ENCODE measurements at regions of chr6 and their contacts with region 1.

Region 1: DNA sequence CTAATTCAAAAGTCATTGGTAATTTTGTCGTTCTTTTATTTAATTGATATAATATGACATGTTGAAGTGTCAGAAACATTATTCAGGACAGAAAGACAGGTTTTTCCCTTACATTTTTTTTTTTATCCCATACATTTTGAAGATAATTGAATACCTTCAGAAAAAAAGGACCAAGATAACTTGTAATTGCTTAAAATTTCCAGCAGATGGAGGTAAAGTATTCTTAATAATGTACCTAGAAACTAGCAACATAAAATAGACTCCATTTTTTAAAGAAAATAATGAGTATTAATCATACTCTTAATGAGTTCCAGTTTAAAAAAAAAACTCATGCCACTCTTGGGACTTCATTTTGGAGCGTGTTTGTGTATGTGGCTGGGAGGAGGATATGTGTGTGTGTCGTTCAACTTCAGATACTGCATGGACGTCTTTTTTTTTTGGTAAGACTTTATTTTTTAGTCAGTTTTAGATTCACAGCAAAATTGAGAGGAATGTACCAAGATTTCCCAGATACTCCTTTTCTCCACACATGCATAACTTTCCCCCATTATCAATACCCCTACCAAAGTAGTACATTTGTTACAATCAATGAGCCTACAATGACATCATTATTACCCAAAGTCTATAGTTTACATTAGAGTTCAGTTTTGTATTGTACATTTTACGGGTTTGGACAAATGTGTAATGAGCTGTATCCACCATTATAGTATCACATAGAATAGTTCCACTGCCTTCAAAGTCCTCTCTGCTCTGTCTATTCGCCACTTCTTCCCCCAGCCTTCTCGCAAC is 79.4 kb downstream of the ROS1 start:
- DNase-seq: peak in 2 of 4 experiments; percentile 3 to 13
- ATAC-seq: peak; percentile 30; the same call in 2 of the 3 replicates
- H3K4me3 ChIP-seq: no peak overlapping the region
- H3K27ac ChIP-seq: no peak overlapping the region
- H3K4me1 ChIP-seq: peaks cover 0 to 4% of the 10 kb centered on the region in 2 experiments; a peak in 2 of 5 replicates
- H3K27me3 ChIP-seq: no peaks in the 10 kb centered on the region
- CTCF ChIP-seq: peak in 1 of 3 experiments; percentile 62; a peak in 3 of 6 replicates
- EP300 ChIP-seq: no peak
- POLR2A ChIP-seq: no peak
- RAD21 ChIP-seq: peak; percentile 52 to 67; a peak in 3 of 4 replicates

Region 2: GRCh38 chr6:117034971-117035370 is 311.4 kb before region 1 on chr6:
- CTCF ChIA-PET with region 1: no interaction called
- POLR2A ChIA-PET with region 1: no interaction called
- in situ Hi-C with region 1: no loop called
- intact Hi-C with region 1: no loop called
- DNase-seq: no peak
- ATAC-seq: no peak
- H3K4me3 ChIP-seq: no peak overlapping the region
- H3K27ac ChIP-seq: no peak overlapping the region
- H3K4me1 ChIP-seq: no peaks in the 10 kb centered on the region
- H3K27me3 ChIP-seq: no peaks in the 10 kb centered on the region
- CTCF ChIP-seq: no peak
- EP300 ChIP-seq: no peak
- POLR2A ChIP-seq: no peak
- RAD21 ChIP-seq: no peak

Region 3: DNA sequence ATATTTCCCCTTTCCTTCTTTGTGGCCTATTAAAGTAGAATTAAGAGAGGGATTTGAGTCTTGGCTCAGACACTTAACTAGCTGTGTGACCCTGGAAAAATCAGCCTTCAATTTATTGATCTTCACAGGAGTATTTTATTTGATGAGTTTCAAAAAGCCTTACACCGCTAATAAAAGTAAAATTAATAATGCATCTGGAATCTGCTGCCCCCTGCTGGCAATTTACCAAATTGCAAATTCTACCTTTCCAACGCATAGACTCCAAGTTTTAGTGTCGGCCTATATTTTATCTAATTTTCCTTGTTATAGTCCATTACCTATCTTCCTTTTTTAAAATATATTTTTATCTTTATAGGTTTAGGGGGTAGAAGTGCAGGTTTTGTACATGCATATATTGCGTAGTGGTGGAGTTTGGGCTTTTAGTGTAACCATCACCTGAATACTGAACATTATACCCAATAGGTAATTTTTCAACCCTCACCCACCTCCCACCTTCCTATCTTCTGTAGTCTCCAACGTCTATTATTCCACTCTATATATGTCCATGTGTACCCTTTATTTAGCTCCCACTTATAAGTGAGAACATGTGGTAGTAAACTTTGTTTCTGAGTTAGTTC is 209.7 kb after region 1 on chr6:
- CTCF ChIA-PET with region 1: interaction called, 11 read pairs
- POLR2A ChIA-PET with region 1: no interaction called
- in situ Hi-C with region 1: no loop called
- intact Hi-C with region 1: loop called (anchors 5 kb)
- DNase-seq: peak in 3 of 4 experiments; percentile 30 to 51 (median 33)
- ATAC-seq: peak; percentile 45
- H3K4me3 ChIP-seq: no peak overlapping the region
- H3K27ac ChIP-seq: no peak overlapping the region
- H3K4me1 ChIP-seq: peaks cover 0 to 8% of the 10 kb centered on the region in 2 experiments; a peak in 3 of 5 replicates
- H3K27me3 ChIP-seq: no peaks in the 10 kb centered on the region
- CTCF ChIP-seq: peak; percentile 50 to 81 (median 55); a peak in 5 of 6 replicates
- EP300 ChIP-seq: no peak
- POLR2A ChIP-seq: no peak
- RAD21 ChIP-seq: peak; percentile 81 to 83

Region 4: DNA sequence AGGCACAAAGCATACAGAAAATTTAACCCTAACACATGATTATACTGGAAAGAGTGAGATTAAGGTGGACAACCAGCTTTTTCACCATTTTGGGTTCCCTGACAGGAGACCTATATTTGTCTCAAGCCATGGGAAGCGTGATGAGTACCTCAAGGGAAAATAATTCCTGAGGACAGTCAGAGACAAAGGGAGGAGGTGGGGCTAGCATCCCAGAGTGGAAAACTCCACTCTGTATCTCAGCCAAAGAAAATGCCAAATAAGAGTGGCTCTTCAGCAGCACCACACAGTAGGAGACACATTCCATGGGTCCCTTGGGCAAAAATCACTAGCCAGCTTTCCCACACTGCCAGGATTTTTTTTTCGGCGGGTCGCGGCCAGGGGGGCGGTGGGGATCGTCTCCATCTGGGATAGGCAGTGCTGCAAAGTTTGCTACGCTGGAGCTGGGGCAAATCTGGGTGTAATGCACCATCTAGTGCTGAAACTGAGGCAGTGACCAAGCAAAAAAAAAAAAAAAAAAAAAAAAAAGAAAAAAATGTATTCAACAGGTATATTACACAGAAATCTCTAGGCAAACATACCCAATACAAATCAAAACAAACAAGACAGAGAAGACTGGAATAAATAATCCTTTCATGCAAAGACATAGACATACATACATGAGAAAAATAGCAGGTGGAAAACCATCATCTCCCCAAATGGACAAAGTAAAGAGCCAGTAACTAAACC is 483.4 kb after region 1 on chr6:
- CTCF ChIA-PET with region 1: no interaction called
- POLR2A ChIA-PET with region 1: no interaction called
- in situ Hi-C with region 1: no loop called
- intact Hi-C with region 1: loop called (anchors 2 kb)
- DNase-seq: peak in 2 of 4 experiments; percentile 14 to 19
- ATAC-seq: peak; percentile 69; the same call in 2 of the 3 replicates
- H3K4me3 ChIP-seq: no peak overlapping the region
- H3K27ac ChIP-seq: no peak overlapping the region
- H3K4me1 ChIP-seq: no peaks in the 10 kb centered on the region
- H3K27me3 ChIP-seq: no peaks in the 10 kb centered on the region
- CTCF ChIP-seq: peak; percentile 39 to 47 (median 43); a peak in 5 of 6 replicates
- EP300 ChIP-seq: no peak
- POLR2A ChIP-seq: no peak
- RAD21 ChIP-seq: no peak

Region 5: DNA sequence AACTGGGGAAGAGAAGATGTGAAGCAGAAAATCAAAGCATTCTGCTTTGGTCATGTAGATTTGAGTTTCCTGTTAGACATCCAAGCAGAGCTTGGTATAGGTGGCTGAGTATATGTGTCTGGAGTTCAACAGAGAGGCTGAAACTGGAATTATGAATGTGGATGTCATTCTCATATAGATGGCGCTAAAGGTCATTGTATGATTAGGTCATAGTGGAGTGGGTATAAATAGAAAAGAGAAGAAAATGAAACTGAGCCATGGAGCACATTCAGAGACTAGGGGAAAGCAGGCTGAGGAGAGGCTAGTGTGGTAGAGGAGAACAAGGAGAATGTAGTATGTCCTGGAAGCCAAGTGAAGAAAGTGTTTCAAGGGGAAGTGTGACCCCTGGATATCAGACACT is 906.1 kb after region 1 on chr6:
- CTCF ChIA-PET with region 1: no interaction called
- POLR2A ChIA-PET with region 1: no interaction called
- in situ Hi-C with region 1: no loop called
- intact Hi-C with region 1: loop called (anchors 10 kb)
- DNase-seq: peak in 1 of 4 experiments; percentile 8
- ATAC-seq: peak; percentile 60
- H3K4me3 ChIP-seq: no peak overlapping the region
- H3K27ac ChIP-seq: no peak overlapping the region
- H3K4me1 ChIP-seq: no peaks in the 10 kb centered on the region
- H3K27me3 ChIP-seq: no peaks in the 10 kb centered on the region; a peak in 2 of 5 replicates
- CTCF ChIP-seq: peak; percentile 7 to 26 (median 12); a peak in 2 of 6 replicates
- EP300 ChIP-seq: no peak
- POLR2A ChIP-seq: no peak
- RAD21 ChIP-seq: peak in 1 of 2 experiments; percentile 26; a peak in 1 of 4 replicates

Measured in K562 (cell line).